Mammary epithelial cell (primary cell): ENCODE measurements at regions of chr17 and their contacts with region 1.

Region 1: DNA sequence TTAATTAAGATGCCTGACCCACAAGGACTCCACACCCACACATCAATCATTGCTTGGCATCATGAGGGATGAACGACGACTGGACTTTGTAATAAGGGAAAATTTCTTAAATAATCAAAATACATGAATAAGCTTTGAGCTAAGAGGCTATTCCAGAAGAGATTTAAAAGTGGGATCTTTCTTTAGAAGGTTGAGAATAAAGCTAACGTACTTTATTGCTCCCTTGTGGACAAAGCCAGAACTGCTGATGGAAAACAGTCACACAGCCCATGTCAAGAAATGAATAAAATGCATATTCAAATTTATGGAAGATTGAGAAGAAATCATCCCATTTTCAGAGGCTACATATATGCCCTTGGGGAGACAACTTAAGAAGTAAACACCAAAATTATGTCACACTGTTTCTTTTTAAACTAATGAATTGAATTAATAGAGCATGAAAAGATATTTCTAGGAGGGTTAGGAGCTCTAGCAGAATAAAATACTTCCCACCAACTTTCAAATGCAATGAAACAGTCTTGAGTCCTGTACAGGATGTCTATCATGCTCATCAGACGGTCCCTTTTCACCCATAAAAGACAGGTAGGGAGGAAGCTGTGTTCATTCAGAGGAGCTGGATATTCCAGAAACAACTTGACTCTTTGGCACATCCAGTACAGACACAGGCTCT is 60.2 kb upstream of the PHOSPHO1 start:
- DNase-seq: no peak
- H3K4me3 ChIP-seq: no peak overlapping the region
- H3K27ac ChIP-seq: no peak overlapping the region
- H3K4me1 ChIP-seq: no peaks in the 10 kb centered on the region
- H3K27me3 ChIP-seq: no peaks in the 10 kb centered on the region
- CTCF ChIP-seq: peak; percentile 73 to 83

Region 2: DNA sequence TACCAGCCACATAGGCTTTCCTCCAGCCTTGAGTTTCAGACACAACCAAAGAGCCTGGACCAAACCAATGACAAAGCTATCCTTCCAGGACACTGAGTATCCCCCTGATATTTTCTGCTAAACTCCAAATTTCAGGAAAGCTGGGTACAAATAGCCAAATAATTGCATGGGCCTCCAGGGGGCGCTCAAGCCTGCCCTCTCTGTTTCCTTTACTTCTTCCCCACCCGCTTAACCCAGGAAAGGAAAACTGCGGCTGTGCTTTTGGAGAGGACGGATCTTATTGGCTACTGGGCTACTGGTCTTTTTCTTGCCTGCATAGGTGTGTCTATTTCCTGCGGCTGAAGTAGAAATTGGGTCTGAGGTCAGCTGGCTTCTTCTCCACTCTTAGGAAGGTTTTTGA is 110.5 kb before region 1 on chr17:
- CTCF ChIA-PET with region 1: interaction called, 7 read pairs
- dilution Hi-C with region 1: no loop called
- in situ Hi-C with region 1: no loop called
- intact Hi-C with region 1: loop called (anchors 1 kb)
- DNase-seq: no peak
- H3K4me3 ChIP-seq: no peak overlapping the region
- H3K27ac ChIP-seq: no peak overlapping the region
- H3K4me1 ChIP-seq: no peaks in the 10 kb centered on the region
- H3K27me3 ChIP-seq: no peaks in the 10 kb centered on the region
- CTCF ChIP-seq: peak; percentile 79 to 80

Region 3: GRCh38 chr17:49327835-49328784 is 37.3 kb after region 1 on chr17:
- CTCF ChIA-PET with region 1: no interaction called
- dilution Hi-C with region 1: no loop called
- in situ Hi-C with region 1: no loop called
- intact Hi-C with region 1: no loop called
- DNase-seq: peak; percentile 30
- H3K4me3 ChIP-seq: no peak overlapping the region
- H3K27ac ChIP-seq: no peak overlapping the region
- H3K4me1 ChIP-seq: no peaks in the 10 kb centered on the region
- H3K27me3 ChIP-seq: no peaks in the 10 kb centered on the region
- CTCF ChIP-seq: no peak

Region 4: DNA sequence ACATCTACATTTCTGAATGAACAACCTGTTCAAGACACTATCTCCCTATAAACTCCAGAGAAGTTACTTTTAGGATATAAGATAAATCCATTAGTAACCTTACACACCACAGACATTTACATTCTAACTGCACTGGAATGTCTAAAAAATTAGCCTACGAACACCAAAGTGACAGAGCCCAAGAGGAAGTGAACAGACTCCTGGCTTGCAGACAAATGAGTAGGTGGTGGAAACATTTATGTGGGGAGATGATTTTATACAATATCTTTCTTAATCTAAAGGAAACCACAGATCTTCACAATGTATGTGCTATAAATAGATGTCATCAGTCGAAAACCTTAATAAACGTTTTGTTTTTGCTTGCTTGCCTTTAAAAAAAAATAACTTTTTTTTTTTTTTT is 52.4 kb after region 1 on chr17:
- CTCF ChIA-PET with region 1: no interaction called
- dilution Hi-C with region 1: no loop called
- in situ Hi-C with region 1: no loop called
- intact Hi-C with region 1: no loop called
- DNase-seq: peak; percentile 35
- H3K4me3 ChIP-seq: no peak overlapping the region
- H3K27ac ChIP-seq: no peak overlapping the region
- H3K4me1 ChIP-seq: peaks cover 5% of the 10 kb centered on the region
- H3K27me3 ChIP-seq: no peaks in the 10 kb centered on the region
- CTCF ChIP-seq: no peak

Region 5: DNA sequence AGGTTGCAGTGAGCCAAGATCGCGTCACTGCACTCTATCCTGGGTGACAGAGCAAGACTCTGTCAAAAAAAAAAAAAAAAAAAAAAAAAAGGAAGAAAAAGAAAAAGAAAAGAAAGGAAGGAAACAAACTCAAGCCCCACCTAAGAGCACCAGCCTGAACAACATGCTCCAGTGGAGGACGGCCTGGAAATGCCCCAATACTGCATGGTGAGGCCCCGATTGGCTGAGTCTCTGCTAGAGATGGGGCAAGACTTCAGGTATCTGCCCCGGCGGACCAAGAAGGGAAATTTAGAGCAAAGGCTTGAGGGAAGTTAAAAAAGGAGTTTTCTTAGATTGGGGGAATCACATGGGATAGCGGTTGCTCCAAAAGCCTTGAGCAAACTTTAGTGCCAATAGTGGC is 81.6 kb after region 1 on chr17:
- CTCF ChIA-PET with region 1: no interaction called
- dilution Hi-C with region 1: no loop called
- in situ Hi-C with region 1: no loop called
- intact Hi-C with region 1: no loop called
- DNase-seq: no peak
- H3K4me3 ChIP-seq: no peak overlapping the region
- H3K27ac ChIP-seq: no peak overlapping the region
- H3K4me1 ChIP-seq: no peaks in the 10 kb centered on the region
- H3K27me3 ChIP-seq: no peaks in the 10 kb centered on the region
- CTCF ChIP-seq: no peak